WTC11 (cell line): ENCODE measurements at regions of chr19 and their contacts with region 1.

Region 1: GRCh38 chr19:14479975-14480699 is 5.0 kb upstream of the PTGER1 start:
- DNase-seq: peak; percentile 94
- ATAC-seq: peak; percentile 85
- H3K4me3 Mint-ChIP-seq: no peak overlapping the region
- H3K27ac Mint-ChIP-seq: no peak overlapping the region
- H3K4me1 Mint-ChIP-seq: peaks cover 11% of the 10 kb centered on the region
- H3K27me3 Mint-ChIP-seq: no peaks in the 10 kb centered on the region
- CTCF ChIP-seq: peak; percentile 98

Region 2: GRCh38 chr19:14425696-14426138 is 54.4 kb before region 1 on chr19:
- CTCF ChIA-PET with region 1: interaction called, 48 read pairs
- POLR2A ChIA-PET with region 1: interaction called, 3 read pairs
- DNase-seq: no peak
- ATAC-seq: peak; percentile 50
- H3K4me3 Mint-ChIP-seq: no peak overlapping the region
- H3K27ac Mint-ChIP-seq: peak overlapping the region; percentile 7; the same call in 1 of the 2 replicates
- H3K4me1 Mint-ChIP-seq: peaks cover 10% of the 10 kb centered on the region
- H3K27me3 Mint-ChIP-seq: peaks cover 15% of the 10 kb centered on the region
- CTCF ChIP-seq: no peak

Region 3: DNA sequence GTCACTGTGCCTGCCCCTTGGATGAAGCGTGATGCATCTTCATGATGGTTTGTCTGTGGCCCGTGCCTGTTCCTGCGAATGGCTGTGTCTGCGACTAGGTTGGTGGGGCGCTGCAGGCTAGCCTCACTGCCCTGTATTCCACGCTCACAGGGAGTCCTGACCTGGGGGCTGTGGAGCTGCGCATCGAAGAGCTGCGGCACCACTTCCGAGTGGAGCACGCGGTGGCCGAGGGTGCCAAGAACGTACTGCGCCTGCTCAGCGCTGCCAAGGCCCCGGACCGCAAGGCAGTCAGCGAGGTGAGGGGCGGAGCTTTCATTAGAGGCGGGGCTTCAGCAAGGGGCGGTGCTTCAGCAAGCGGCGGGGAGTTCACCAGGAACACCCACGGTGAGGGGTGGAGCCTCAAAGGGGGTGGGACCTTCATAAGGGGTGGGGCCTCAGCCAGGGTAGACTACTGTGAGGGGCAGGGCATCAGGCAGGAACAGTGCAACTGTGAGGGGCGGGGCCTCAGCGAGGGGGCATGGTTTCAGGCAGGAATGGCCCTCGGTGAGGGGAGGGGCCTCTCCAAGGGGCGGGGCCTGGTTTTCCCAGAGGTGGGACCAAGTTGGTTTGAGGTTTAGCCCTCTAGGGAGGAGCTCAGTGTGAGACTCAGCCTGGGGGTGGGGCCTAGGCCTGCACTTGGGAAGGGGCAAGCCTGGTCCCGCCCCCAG is 29.8 kb before region 1 on chr19:
- CTCF ChIA-PET with region 1: interaction called, 23 read pairs
- POLR2A ChIA-PET with region 1: no interaction called
- DNase-seq: peak; percentile 100
- ATAC-seq: peak; percentile 99
- H3K4me3 Mint-ChIP-seq: no peak overlapping the region
- H3K27ac Mint-ChIP-seq: peak overlapping the region; percentile 89
- H3K4me1 Mint-ChIP-seq: no peaks in the 10 kb centered on the region
- H3K27me3 Mint-ChIP-seq: no peaks in the 10 kb centered on the region
- CTCF ChIP-seq: no peak

Region 4: DNA sequence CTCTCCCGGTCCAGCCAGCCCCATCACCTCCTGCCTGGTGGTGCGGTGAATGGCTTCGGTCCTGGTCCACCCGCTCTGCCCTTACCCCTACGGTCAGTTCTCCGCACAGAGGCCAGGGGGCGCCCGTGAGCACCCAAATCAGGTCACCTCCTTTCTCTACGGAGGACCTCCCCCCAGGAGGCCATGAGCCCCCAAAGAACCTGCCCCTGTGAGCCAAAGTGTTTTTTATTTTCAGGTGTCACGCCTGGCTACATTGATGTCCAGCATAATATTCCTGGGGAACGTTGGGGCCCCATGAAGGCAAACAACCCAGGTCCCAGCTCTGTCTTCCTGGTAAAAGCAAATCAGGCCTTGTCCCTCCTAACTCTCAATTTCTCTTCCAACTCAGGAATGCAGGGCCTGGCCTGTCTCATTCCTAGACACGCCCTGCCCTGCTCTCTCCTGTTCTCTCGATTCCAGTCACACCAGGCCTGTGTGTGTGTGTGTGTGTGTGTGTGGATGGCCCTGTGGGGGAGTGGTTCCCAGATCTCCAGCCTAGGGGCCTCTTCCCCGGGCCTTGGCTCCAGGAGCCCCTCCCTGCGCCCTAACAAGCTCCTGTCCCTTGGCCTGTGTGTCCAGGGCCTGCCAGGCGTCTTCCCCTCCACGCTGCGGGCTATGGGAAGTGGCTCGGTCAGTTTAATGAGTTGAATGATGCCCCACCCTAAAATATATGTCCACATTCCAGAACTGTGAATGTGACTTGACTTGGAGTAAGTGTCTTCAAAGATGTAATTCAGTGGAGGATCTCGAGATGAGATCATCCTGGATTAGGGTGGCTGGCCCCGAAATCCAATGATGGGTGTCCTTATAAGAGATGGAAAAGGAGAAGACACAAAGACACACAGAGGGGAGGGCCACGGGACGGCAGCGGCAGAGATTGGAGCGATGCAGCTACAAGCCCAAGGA is 25.6 kb after region 1 on chr19:
- CTCF ChIA-PET with region 1: interaction called, 16 read pairs
- POLR2A ChIA-PET with region 1: no interaction called
- DNase-seq: peak; percentile 91
- ATAC-seq: peak; percentile 97
- H3K4me3 Mint-ChIP-seq: no peak overlapping the region
- H3K27ac Mint-ChIP-seq: no peak overlapping the region
- H3K4me1 Mint-ChIP-seq: peaks cover 6% of the 10 kb centered on the region
- H3K27me3 Mint-ChIP-seq: peaks cover 8% of the 10 kb centered on the region; the same call in 1 of the 2 replicates
- CTCF ChIP-seq: peak; percentile 96

Region 5: GRCh38 chr19:14550201-14550784 is 70.2 kb after region 1 on chr19:
- CTCF ChIA-PET with region 1: interaction called, 14 read pairs
- POLR2A ChIA-PET with region 1: no interaction called
- DNase-seq: no peak
- ATAC-seq: no peak
- H3K4me3 Mint-ChIP-seq: no peak overlapping the region
- H3K27ac Mint-ChIP-seq: peak overlapping the region; percentile 67
- H3K4me1 Mint-ChIP-seq: peaks cover 12% of the 10 kb centered on the region
- H3K27me3 Mint-ChIP-seq: no peaks in the 10 kb centered on the region
- CTCF ChIP-seq: no peak